Activated CD4-positive, alpha-beta T cell treated with anti-CD3 and anti-CD28 coated beads, Interleukin-2, amount 10 ng/mL, durations not matched to agents 24 days and 14 days (primary cell): ENCODE measurements at regions of chr6 and their contacts with region 1.

Region 1: GRCh38 chr6:26285143-26286134 is 79.6 kb upstream of the BTN3A2 start:
- DNase-seq: peak; percentile 99
- H3K4me3 Mint-ChIP-seq: peak overlapping the region; percentile 87
- H3K27ac Mint-ChIP-seq: peak overlapping the region; percentile 96
- H3K4me1 Mint-ChIP-seq: peaks cover 45% of the 10 kb centered on the region
- H3K27me3 Mint-ChIP-seq: peaks cover 7% of the 10 kb centered on the region

Region 2: DNA sequence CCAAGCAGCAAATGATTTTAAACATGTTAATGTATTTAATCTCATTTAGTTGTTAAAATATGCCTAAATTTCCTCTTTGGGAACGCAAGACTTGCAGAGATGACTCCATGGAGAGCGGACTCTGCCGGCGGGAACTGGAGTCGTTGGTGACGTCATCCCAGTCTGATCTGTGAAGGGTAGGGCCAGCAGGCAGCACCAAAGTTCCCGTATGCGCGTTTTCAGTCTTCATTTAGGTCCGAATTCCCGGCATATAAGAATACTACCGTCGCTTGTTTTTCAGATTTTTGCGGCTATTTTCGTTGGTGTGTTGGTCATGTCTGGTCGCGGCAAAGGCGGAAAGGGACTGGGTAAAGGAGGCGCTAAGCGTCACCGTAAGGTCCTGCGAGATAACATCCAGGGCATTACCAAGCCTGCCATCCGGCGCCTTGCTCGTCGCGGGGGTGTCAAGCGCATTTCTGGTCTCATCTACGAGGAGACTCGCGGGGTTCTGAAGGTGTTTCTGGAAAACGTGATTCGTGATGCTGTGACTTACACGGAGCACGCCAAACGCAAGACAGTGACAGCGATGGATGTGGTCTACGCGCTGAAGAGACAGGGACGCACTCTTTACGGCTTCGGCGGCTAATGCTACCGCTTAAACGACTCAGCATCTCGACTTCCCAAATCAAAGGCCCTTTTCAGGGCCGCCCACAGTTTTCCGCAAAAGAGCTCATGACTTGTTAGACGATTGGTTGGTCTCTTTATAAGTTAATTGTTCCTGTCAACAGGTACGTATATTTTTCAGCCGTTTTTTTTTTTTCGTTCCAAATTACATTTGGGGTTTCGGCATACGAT is 80.9 kb before region 1 on chr6:
- intact Hi-C with region 1: loop called (anchors 1 kb)
- DNase-seq: peak; percentile 96
- H3K4me3 Mint-ChIP-seq: no peak overlapping the region
- H3K27ac Mint-ChIP-seq: no peak overlapping the region
- H3K4me1 Mint-ChIP-seq: peaks cover 31% of the 10 kb centered on the region
- H3K27me3 Mint-ChIP-seq: peaks cover 4% of the 10 kb centered on the region

Region 3: GRCh38 chr6:26240154-26241032 is 45.0 kb before region 1 on chr6:
- intact Hi-C with region 1: loop called (anchors 1 kb)
- DNase-seq: peak; percentile 95
- H3K4me3 Mint-ChIP-seq: peak overlapping the region; percentile 81
- H3K27ac Mint-ChIP-seq: peak overlapping the region; percentile 94
- H3K4me1 Mint-ChIP-seq: peaks cover 41% of the 10 kb centered on the region
- H3K27me3 Mint-ChIP-seq: no peaks in the 10 kb centered on the region

Region 4: GRCh38 chr6:26312501-26313390 is 27.3 kb after region 1 on chr6:
- intact Hi-C with region 1: loop called (anchors 1 kb)
- DNase-seq: peak; percentile 94
- H3K4me3 Mint-ChIP-seq: peak overlapping the region; percentile 91
- H3K27ac Mint-ChIP-seq: peak overlapping the region; percentile 81
- H3K4me1 Mint-ChIP-seq: peaks cover 41% of the 10 kb centered on the region
- H3K27me3 Mint-ChIP-seq: peaks cover 2% of the 10 kb centered on the region

Region 5: DNA sequence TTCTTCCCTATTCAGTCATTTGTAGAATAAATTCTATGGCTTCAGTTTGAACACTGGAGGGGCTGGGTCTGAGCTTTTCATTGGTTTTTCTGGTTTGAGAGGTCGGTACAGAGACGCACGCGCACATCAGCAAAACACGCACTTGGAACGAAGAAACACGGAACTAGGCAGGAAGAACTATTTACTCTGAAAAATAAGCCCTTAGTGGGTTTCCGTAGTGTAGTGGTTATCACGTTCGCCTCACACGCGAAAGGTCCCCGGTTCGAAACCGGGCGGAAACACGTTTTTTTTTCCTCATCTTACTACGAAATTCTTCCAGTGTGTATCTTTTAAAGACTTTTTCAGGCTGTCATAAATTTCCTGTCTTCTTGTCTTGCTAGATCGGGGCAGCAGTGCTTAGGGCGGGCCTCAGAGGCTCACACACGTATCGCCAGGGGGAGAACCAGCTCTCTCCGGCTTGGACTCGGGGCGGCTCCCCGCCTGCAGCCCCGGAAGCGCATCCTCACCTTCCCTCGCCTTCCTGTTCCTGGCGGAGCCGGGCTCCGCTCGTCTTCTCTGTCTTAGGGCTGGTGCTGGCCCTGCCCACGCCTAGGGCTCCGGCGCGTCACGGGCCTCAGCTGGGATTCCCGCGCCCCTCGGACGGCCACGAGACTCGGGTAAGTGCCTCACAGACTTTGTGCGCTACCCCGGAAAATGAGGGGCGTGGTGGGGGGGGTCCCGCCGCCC is 252.6 kb after region 1 on chr6 and contains the start of gene HMGN4:
- intact Hi-C with region 1: loop called (anchors 1 kb)
- DNase-seq: peak; percentile 95
- H3K4me3 Mint-ChIP-seq: peak within 1 kb of the TSS; percentile 93
- H3K27ac Mint-ChIP-seq: peak within 1 kb of the TSS; percentile 95
- H3K4me1 Mint-ChIP-seq: peaks cover 51% of the 10 kb centered on the region
- H3K27me3 Mint-ChIP-seq: peaks cover 2% of the 10 kb centered on the region
- total RNA-seq, gene HMGN4: 81.6 and 83.4 TPM in 2 replicates

Region 6: DNA sequence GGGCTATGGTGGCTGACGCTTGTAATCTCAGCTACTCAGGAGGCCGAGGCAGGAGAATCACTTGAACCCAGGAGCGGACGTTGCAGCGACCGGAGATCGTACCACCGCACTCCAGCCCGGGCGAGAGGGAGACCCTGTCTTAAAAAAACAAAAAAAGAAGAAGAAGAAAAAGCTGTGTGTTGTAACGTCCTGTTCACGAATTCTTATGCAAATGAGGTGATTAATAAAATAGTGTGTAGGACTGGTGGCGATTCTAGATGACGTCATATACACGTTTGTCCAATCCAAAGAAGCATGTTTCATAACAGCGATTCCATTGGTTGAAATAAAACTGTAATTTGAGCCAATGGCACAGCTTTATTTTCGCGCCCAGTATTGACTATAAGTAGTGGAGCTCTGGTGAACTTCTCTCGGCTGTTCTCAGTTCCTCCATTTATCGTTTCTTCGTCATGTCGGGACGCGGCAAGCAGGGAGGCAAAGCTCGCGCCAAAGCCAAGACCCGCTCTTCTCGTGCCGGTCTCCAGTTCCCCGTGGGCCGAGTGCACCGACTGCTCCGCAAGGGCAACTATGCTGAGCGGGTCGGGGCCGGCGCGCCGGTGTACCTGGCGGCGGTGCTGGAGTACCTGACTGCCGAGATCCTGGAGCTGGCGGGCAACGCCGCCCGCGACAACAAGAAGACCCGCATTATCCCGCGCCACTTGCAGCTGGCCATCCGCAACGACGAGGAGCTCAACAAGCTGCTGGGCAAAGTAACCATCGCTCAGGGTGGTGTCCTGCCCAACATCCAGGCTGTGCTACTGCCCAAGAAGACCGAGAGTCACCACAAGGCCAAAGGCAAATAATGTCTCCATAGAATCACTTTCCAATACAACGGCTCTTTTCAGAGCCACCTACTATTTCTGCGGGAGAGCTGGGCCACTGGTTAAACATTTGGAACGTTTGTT is 1579.7 kb after region 1 on chr6:
- intact Hi-C with region 1: loop called (anchors 10 kb)
- DNase-seq: peak; percentile 95
- H3K4me3 Mint-ChIP-seq: peak overlapping the region; percentile 97
- H3K27ac Mint-ChIP-seq: peak overlapping the region; percentile 100
- H3K4me1 Mint-ChIP-seq: peaks cover 58% of the 10 kb centered on the region
- H3K27me3 Mint-ChIP-seq: peaks cover 2% of the 10 kb centered on the region